Cardiac septum (tissue), 1 donor: ENCODE measurements at regions of chr1 and their contacts with region 1.

Region 1: GRCh38 chr1:2801535-2802291 is at the start of gene TTC34:
- DNase-seq: no peak
- total RNA-seq, gene TTC34: 0.35 TPM

Region 2: GRCh38 chr1:2429780-2430591 is 371.7 kb before region 1 on chr1:
- intact Hi-C with region 1: loop called (anchors 10 kb)
- DNase-seq: no peak

Region 3: GRCh38 chr1:3101124-3101939 is 299.6 kb after region 1 on chr1:
- intact Hi-C with region 1: no loop called
- DNase-seq: no peak